T-cell (primary cell): ENCODE measurements at regions of chr11 and their contacts with region 1.

Region 1: GRCh38 chr11:130839981-130840666 is 76.2 kb downstream of the SNX19 start:
- DNase-seq: no peak
- ATAC-seq: no peak
- H3K4me3 ChIP-seq: no peak overlapping the region
- H3K4me3 Mint-ChIP-seq: no peak overlapping the region
- H3K27ac ChIP-seq: no peak overlapping the region
- H3K27ac Mint-ChIP-seq: no peak overlapping the region
- H3K4me1 ChIP-seq: no peaks in the 10 kb centered on the region
- H3K4me1 Mint-ChIP-seq: no peaks in the 10 kb centered on the region
- H3K27me3 ChIP-seq: no peaks in the 10 kb centered on the region
- H3K27me3 Mint-ChIP-seq: peaks cover 22% of the 10 kb centered on the region in 2 donors

Region 2: DNA sequence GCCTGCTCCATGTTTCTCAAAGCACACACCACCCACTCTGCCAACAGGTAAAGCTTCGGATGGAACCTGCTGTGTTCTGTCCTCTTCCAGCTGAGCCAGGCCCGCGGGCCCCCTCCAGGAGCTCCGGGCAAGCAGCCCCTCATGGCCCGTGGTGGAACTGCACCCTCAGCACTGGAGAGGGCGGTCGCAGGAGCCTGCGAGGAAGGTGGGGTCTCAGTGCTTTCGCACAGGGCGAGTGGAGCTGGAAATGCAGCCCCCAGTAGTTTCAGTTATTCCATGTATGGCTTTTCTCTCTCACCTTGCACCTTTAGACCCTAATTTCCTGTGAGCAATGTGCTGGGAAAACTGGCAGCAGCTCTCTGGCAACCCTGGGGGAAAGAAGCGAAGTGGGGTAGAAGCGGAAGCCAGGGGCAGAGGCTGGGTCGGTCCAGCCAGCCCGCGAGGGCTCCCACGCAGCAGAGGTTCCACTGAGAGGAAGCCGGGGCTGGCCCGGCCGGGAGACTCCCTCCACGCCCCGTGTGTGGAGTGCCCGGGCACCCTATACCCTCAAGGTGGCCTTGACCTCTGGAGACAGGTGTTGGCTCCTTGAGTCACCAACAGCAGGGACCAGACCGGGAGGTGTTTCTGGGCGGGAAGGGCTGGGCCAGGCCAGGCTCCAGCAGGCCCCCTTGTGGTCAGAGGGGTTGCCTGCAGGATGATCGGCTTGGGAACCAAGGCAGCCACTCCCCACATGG is 1144.4 kb before region 1 on chr11:
- CTCF ChIA-PET with region 1: interaction called in 1 of 2 experiments, 13 read pairs
- POLR2A ChIA-PET with region 1: no interaction called
- DNase-seq: peak; percentile 27 to 77 (median 60)
- ATAC-seq: peak; percentile 91 to 95 (median 92)
- H3K4me3 ChIP-seq: peak overlapping the region; percentile 48 to 55
- H3K4me3 Mint-ChIP-seq: peak overlapping the region; percentile 77 to 85 (median 84)
- H3K27ac ChIP-seq: no peak overlapping the region
- H3K27ac Mint-ChIP-seq: peak overlapping the region; percentile 23 to 58
- H3K4me1 ChIP-seq: peaks cover 0 to 14% of the 10 kb centered on the region in 2 experiments
- H3K4me1 Mint-ChIP-seq: peaks cover 7 to 10% (median 8%) of the 10 kb centered on the region in 3 donors
- H3K27me3 ChIP-seq: peaks cover 0 to 26% of the 10 kb centered on the region in 2 experiments
- H3K27me3 Mint-ChIP-seq: peaks cover 0 to 8% of the 10 kb centered on the region in 2 donors

Region 3: DNA sequence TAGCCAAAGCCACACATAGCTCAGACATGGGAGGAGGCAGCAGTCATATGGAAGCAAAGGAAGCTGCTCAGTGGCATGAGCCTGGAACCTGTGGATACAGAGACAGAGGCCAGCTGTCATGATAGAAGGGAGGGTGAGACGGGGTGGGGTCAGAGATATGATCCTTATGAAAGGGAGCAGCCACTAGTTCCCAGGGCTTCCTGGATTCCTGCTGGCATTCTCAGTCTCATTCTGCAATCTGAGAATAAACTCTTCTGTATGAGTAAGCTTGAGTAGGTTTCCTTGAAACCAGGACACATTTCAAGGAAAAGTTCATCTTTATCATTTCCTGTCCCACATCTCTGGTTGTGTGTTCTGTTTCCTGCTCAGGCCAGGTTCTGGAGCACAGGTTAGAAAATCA is 296.4 kb after region 1 on chr11:
- CTCF ChIA-PET with region 1: no interaction called
- POLR2A ChIA-PET with region 1: no interaction called
- DNase-seq: no peak
- ATAC-seq: no peak
- H3K4me3 ChIP-seq: no peak overlapping the region
- H3K4me3 Mint-ChIP-seq: no peak overlapping the region
- H3K27ac ChIP-seq: no peak overlapping the region
- H3K27ac Mint-ChIP-seq: no peak overlapping the region
- H3K4me1 ChIP-seq: no peaks in the 10 kb centered on the region
- H3K4me1 Mint-ChIP-seq: no peaks in the 10 kb centered on the region
- H3K27me3 ChIP-seq: peaks cover 0 to 3% of the 10 kb centered on the region in 2 experiments
- H3K27me3 Mint-ChIP-seq: peaks cover 0 to 4% of the 10 kb centered on the region in 2 donors

Region 4: GRCh38 chr11:132379540-132379939 is 1539.4 kb after region 1 on chr11:
- CTCF ChIA-PET with region 1: no interaction called
- POLR2A ChIA-PET with region 1: no interaction called
- DNase-seq: no peak
- ATAC-seq: no peak
- H3K4me3 ChIP-seq: no peak overlapping the region
- H3K4me3 Mint-ChIP-seq: no peak overlapping the region
- H3K27ac ChIP-seq: no peak overlapping the region
- H3K27ac Mint-ChIP-seq: no peak overlapping the region
- H3K4me1 ChIP-seq: no peaks in the 10 kb centered on the region
- H3K4me1 Mint-ChIP-seq: no peaks in the 10 kb centered on the region
- H3K27me3 ChIP-seq: no peaks in the 10 kb centered on the region
- H3K27me3 Mint-ChIP-seq: no peaks in the 10 kb centered on the region